K562 (cell line): ENCODE measurements at regions of chr7 and their contacts with region 1.

Region 1: GRCh38 chr7:26090927-26091519 is 61.0 kb upstream of the NFE2L3 start:
- DNase-seq: peak; percentile 28 to 61 (median 38)
- ATAC-seq: peak; percentile 86
- H3K4me3 ChIP-seq: no peak overlapping the region
- H3K27ac ChIP-seq: no peak overlapping the region
- H3K4me1 ChIP-seq: no peaks in the 10 kb centered on the region; a peak in 1 of 5 replicates
- H3K27me3 ChIP-seq: peaks cover 0 to 5% of the 10 kb centered on the region in 2 experiments; a peak in 1 of 5 replicates
- CTCF ChIP-seq: peak; percentile 63 to 74 (median 69)
- EP300 ChIP-seq: no peak
- POLR2A ChIP-seq: no peak
- RAD21 ChIP-seq: peak; percentile 82 to 88

Region 2: GRCh38 chr7:26187380-26188205 is 96.6 kb after region 1 on chr7:
- CTCF ChIA-PET with region 1: no interaction called
- POLR2A ChIA-PET with region 1: interaction called, 24 read pairs
- in situ Hi-C with region 1: loop called (anchors 5 kb)
- intact Hi-C with region 1: no loop called
- DNase-seq: peak in 2 of 4 experiments; percentile 27 to 60
- ATAC-seq: peak; percentile 50
- H3K4me3 ChIP-seq: no peak overlapping the region
- H3K27ac ChIP-seq: peak overlapping the region; percentile 61
- H3K4me1 ChIP-seq: peaks cover 7 to 29% of the 10 kb centered on the region in 2 experiments; a peak in 4 of 5 replicates
- H3K27me3 ChIP-seq: no peaks in the 10 kb centered on the region
- CTCF ChIP-seq: no peak
- EP300 ChIP-seq: no peak
- POLR2A ChIP-seq: peak; percentile 86
- RAD21 ChIP-seq: no peak; a peak in 1 of 4 replicates

Region 3: DNA sequence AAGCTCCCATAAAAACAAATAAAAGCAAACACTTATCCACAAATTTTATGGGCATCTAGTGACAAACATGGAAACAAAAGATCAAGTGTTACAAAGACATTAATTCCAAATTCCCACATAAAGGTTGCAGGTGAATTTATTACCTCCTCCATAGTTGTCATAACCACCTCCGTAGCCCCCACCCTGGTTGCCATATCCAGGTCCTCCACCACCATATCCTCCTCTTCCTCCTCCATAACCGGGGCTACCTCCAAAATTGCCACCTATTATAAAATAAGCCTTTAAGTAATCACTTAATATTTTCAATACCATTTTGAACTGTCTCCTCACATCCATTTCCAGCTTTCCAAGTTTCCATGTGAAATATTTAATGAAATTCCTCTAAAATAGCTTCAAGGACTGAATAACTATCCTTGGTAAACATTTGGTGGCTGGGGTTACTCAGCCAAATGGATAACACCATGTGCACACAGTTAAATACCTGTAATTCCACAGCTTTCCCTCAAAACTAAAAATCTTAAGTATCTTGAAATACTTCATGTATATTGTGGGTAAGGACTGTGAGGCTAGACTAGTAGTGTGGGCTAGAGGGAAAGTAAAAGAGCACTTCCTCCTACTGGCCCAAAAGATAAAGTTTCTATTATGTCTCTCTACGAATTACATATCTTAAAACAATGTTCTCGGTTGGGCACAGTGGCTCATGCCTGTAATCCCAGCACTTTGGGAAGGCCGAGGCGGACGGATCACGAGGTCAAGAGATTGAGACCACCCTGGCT is 102.6 kb after region 1 on chr7:
- CTCF ChIA-PET with region 1: interaction called, 10 read pairs
- POLR2A ChIA-PET with region 1: interaction called, 24 read pairs
- in situ Hi-C with region 1: no loop called
- intact Hi-C with region 1: no loop called
- DNase-seq: no peak
- ATAC-seq: peak; percentile 1; the same call in 1 of the 3 replicates
- H3K4me3 ChIP-seq: no peak overlapping the region
- H3K27ac ChIP-seq: peak overlapping the region; percentile 32; the same call in 1 of the 3 replicates
- H3K4me1 ChIP-seq: peaks cover 3 to 30% of the 10 kb centered on the region in 2 experiments; a peak in 3 of 5 replicates
- H3K27me3 ChIP-seq: no peaks in the 10 kb centered on the region
- CTCF ChIP-seq: no peak
- EP300 ChIP-seq: no peak
- POLR2A ChIP-seq: no peak; the same call in none of the 2 replicates
- RAD21 ChIP-seq: no peak

Region 4: GRCh38 chr7:26284995-26285632 is 194.1 kb after region 1 on chr7:
- CTCF ChIA-PET with region 1: interaction called, 17 read pairs
- POLR2A ChIA-PET with region 1: no interaction called
- in situ Hi-C with region 1: loop called (anchors 5 kb)
- intact Hi-C with region 1: loop called (anchors 1 kb)
- DNase-seq: peak; percentile 31 to 81 (median 58)
- ATAC-seq: peak; percentile 99
- H3K4me3 ChIP-seq: no peak overlapping the region
- H3K27ac ChIP-seq: no peak overlapping the region
- H3K4me1 ChIP-seq: peaks cover 0 to 5% of the 10 kb centered on the region in 2 experiments; a peak in 2 of 5 replicates
- H3K27me3 ChIP-seq: no peaks in the 10 kb centered on the region; a peak in 1 of 5 replicates
- CTCF ChIP-seq: peak; percentile 68 to 88 (median 72)
- EP300 ChIP-seq: no peak
- POLR2A ChIP-seq: no peak
- RAD21 ChIP-seq: peak; percentile 94 to 95

Region 5: DNA sequence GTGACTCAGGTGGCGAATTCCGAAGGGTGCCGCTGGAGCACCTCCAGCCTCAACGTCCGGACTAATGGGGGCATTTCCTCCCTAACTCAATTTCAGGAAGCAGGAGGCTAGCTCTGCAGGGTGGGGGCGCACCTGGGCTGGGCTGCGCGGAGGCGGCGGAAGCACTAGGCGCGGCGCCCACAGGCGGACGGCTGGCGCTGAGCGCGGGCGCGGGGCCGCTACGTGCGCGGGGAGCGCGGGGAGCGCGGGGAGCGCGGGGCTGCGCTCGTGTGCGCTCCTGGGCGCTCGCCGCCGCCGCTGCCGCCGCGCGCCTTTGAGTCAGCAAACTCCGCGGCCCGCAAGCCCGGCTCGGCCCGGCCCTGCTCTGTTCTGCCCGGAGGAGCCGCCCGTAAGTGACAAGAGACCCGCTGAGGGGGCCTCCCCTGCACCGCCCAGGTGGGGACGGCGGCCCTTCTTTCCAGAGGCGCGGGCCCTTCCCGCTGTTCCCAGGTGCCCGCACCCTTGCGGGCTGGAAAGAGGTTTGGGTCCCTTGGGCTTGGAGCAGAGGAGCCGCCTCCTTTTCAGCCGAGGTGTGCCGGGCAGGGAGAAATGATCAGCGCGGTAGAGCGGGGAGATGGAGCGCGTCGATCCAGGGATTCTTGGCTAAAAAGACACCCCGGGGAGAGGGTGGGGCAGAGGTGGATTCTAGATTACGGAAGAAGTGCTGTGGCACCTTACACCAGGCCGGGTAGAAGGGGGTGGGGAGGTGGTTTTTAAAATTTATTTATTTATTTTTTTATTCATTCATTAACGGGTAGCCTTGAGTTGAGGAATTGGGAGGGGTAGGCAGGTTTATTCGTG is 200.9 kb after region 1 on chr7 and contains the start of gene SNX10:
- CTCF ChIA-PET with region 1: no interaction called
- POLR2A ChIA-PET with region 1: no interaction called
- in situ Hi-C with region 1: loop called (anchors 5 kb)
- intact Hi-C with region 1: no loop called
- DNase-seq: peak; percentile 73 to 89 (median 78)
- ATAC-seq: peak; percentile 98
- H3K4me3 ChIP-seq: peak within 1 kb of the TSS; percentile 85
- H3K27ac ChIP-seq: peak within 1 kb of the TSS; percentile 71
- H3K4me1 ChIP-seq: peaks cover 11 to 19% of the 10 kb centered on the region in 2 experiments
- H3K27me3 ChIP-seq: no peaks in the 10 kb centered on the region
- CTCF ChIP-seq: peak; percentile 50 to 86 (median 79)
- EP300 ChIP-seq: no peak
- POLR2A ChIP-seq: peak; percentile 61; the same call in 1 of the 2 replicates
- RAD21 ChIP-seq: peak; percentile 61 to 76
- polyA plus RNA-seq, gene SNX10: 10.9 to 12.4 TPM

Region 6: GRCh38 chr7:26365077-26365900 is 274.3 kb after region 1 on chr7:
- CTCF ChIA-PET with region 1: interaction called, 10 read pairs
- POLR2A ChIA-PET with region 1: no interaction called
- in situ Hi-C with region 1: loop called (anchors 5 kb)
- intact Hi-C with region 1: loop called (anchors 1 kb)
- DNase-seq: peak; percentile 18 to 78 (median 30)
- ATAC-seq: peak; percentile 86
- H3K4me3 ChIP-seq: no peak overlapping the region
- H3K27ac ChIP-seq: no peak overlapping the region
- H3K4me1 ChIP-seq: no peaks in the 10 kb centered on the region; a peak in 1 of 5 replicates
- H3K27me3 ChIP-seq: no peaks in the 10 kb centered on the region
- CTCF ChIP-seq: peak; percentile 70 to 90 (median 71); a peak in 5 of 6 replicates
- EP300 ChIP-seq: no peak
- POLR2A ChIP-seq: no peak
- RAD21 ChIP-seq: peak; percentile 97 to 98

Region 7: DNA sequence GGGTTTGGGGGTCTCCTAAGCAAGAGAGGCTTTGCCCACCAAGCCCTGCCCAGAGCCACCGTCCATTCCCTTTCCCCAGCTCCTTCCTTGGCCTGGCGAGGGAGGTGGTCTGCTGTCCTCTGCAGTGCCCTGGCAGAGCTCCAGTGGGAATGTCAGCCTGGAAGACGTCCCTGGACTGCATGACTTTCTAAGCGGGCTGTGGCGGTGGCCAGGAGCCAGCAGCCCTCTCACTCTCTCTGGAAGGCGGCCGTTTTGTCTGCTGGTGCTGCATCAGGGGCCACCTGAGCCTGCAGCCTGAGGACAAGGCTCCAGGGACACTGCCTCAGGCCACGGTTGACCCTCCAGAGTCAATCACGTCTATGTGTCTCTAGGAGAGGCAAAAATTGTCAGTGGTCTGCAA is 502.4 kb after region 1 on chr7:
- CTCF ChIA-PET with region 1: no interaction called
- POLR2A ChIA-PET with region 1: no interaction called
- in situ Hi-C with region 1: no loop called
- intact Hi-C with region 1: no loop called
- DNase-seq: no peak
- ATAC-seq: no peak
- H3K4me3 ChIP-seq: no peak overlapping the region
- H3K27ac ChIP-seq: no peak overlapping the region
- H3K4me1 ChIP-seq: no peaks in the 10 kb centered on the region; a peak in 1 of 5 replicates
- H3K27me3 ChIP-seq: peaks cover 7 to 26% of the 10 kb centered on the region in 2 experiments; a peak in 3 of 5 replicates
- CTCF ChIP-seq: no peak
- EP300 ChIP-seq: no peak
- POLR2A ChIP-seq: no peak
- RAD21 ChIP-seq: no peak